ENCODE measurements at regions of chr3 and their contacts with region 1.

Region 1: GRCh38 chr3:183210839-183211341 is 42.2 kb upstream of the B3GNT5 start:
- DNase-seq: peak; percentile 56
- H3K4me3 Mint-ChIP-seq: no peak overlapping the region
- H3K27ac Mint-ChIP-seq: peak overlapping the region; percentile 67
- H3K4me1 Mint-ChIP-seq: peaks cover 46% of the 10 kb centered on the region
- H3K27me3 Mint-ChIP-seq: no peaks in the 10 kb centered on the region

Region 2: GRCh38 chr3:183224180-183224970 is 13.5 kb after region 1 on chr3:
- CTCF ChIA-PET with region 1: interaction called, 3 read pairs
- POLR2A ChIA-PET with region 1: no interaction called
- intact Hi-C with region 1: loop called (anchors 1 kb)
- DNase-seq: peak; percentile 66
- H3K4me3 Mint-ChIP-seq: peak overlapping the region; percentile 16
- H3K27ac Mint-ChIP-seq: no peak overlapping the region
- H3K4me1 Mint-ChIP-seq: peaks cover 23% of the 10 kb centered on the region
- H3K27me3 Mint-ChIP-seq: no peaks in the 10 kb centered on the region